Pancreas (tissue), 10 donors: ENCODE measurements at regions of chr11 and their contacts with region 1.

Region 1: DNA sequence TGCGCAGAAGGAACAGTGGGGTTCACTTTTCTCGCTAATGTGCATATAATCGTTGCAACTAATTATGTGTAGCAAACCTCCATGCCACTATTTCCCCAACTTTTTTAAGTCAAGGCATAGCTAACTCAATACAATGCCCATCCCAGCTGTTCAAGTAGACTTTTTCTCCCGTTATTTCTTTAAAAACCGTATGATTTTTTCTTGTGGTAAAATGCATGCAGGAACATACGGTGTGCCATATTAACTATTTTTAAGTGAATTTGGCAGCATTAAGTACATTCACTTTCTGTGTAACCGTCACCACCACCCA is 2.8 kb upstream of the DUSP8 start:
- DNase-seq: no peak
- ATAC-seq: no peak
- H3K4me3 ChIP-seq: peak overlapping the region in 1 of 4 donors; percentile 70
- H3K27ac ChIP-seq: no peak overlapping the region
- H3K4me1 ChIP-seq: peaks cover 0 to 6% (median 0%) of the 10 kb centered on the region in 3 donors
- H3K27me3 ChIP-seq: no peaks in the 10 kb centered on the region
- CTCF ChIP-seq: no peak

Region 2: DNA sequence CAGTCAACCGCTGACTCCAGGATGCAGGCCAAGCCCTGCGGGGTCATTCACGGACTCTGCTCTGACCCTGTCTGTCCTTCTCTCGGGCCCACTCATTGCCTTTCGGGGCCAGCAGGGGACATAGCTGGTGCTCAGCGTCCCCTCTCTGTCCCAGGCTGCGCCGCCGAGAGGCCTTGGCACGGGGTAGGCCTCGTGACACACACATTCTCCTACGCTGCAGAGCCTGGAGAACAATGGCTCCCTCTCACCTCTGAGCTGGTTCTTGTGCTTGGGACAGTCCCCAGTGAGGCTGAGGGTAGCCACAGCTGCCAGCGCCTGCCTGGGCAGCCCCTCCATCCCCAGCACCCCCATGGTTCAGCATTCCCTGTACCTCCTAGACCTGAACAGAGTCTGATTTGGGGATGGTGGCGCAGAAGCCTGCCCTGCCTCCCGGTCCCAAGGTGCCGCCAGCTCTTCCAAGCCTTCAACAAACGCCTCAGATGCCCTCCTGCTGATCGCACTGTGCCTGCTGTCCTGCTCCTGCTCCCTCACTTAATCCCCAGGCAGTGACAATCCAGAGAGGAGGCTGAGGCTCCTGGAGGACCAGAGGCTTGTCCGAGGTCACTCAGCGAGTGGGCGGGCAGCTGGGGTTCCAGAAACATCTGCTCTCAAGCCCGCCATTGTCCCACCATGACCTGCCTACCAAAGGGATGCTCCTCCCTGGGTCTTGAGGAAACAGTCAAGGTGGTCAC is 33.2 kb before region 1 on chr11:
- intact Hi-C with region 1: loop called in 1 of 3 experiments (anchors 5 kb)
- DNase-seq: peak in 2 of 6 donors; percentile 16 to 50
- ATAC-seq: no peak
- H3K4me3 ChIP-seq: no peak overlapping the region
- H3K27ac ChIP-seq: no peak overlapping the region
- H3K4me1 ChIP-seq: no peaks in the 10 kb centered on the region
- H3K27me3 ChIP-seq: no peaks in the 10 kb centered on the region
- CTCF ChIP-seq: no peak

Region 3: GRCh38 chr11:1739576-1739975 is 164.7 kb after region 1 on chr11:
- intact Hi-C with region 1: no loop called
- DNase-seq: no peak
- ATAC-seq: no peak
- H3K4me3 ChIP-seq: no peak overlapping the region
- H3K27ac ChIP-seq: no peak overlapping the region
- H3K4me1 ChIP-seq: no peaks in the 10 kb centered on the region
- H3K27me3 ChIP-seq: no peaks in the 10 kb centered on the region
- CTCF ChIP-seq: no peak